Vagina (tissue), 2 donors: ENCODE measurements at regions of chr20 and their contacts with region 1.

Region 1: GRCh38 chr20:47272893-47273590 is 83.5 kb downstream of the ZMYND8 start:
- DNase-seq: no peak
- H3K4me3 ChIP-seq: no peak overlapping the region
- H3K27ac ChIP-seq: peak overlapping the region; percentile 91
- H3K4me1 ChIP-seq: peaks cover 42% of the 10 kb centered on the region
- H3K27me3 ChIP-seq: no peaks in the 10 kb centered on the region
- CTCF ChIP-seq: peak; percentile 90 to 98 (median 94)
- POLR2A ChIP-seq: no peak

Region 2: GRCh38 chr20:47317127-47317895 is 44.3 kb after region 1 on chr20:
- intact Hi-C with region 1: loop called (anchors 5 kb)
- DNase-seq: peak; percentile 98
- H3K4me3 ChIP-seq: peak overlapping the region; percentile 17 to 19
- H3K27ac ChIP-seq: peak overlapping the region; percentile 99
- H3K4me1 ChIP-seq: peaks cover 84% of the 10 kb centered on the region
- H3K27me3 ChIP-seq: no peaks in the 10 kb centered on the region
- CTCF ChIP-seq: no peak
- POLR2A ChIP-seq: peak in 1 of 2 donors; percentile 28

Region 3: GRCh38 chr20:47379433-47380150 is 106.5 kb after region 1 on chr20:
- intact Hi-C with region 1: loop called (anchors 1 kb)
- DNase-seq: peak in 1 of 2 donors; percentile 87
- H3K4me3 ChIP-seq: no peak overlapping the region
- H3K27ac ChIP-seq: no peak overlapping the region
- H3K4me1 ChIP-seq: peaks cover 8% of the 10 kb centered on the region
- H3K27me3 ChIP-seq: no peaks in the 10 kb centered on the region
- CTCF ChIP-seq: no peak
- POLR2A ChIP-seq: no peak

Region 4: GRCh38 chr20:47440857-47441773 is 168.1 kb after region 1 on chr20:
- intact Hi-C with region 1: no loop called
- DNase-seq: no peak
- H3K4me3 ChIP-seq: no peak overlapping the region
- H3K27ac ChIP-seq: no peak overlapping the region
- H3K4me1 ChIP-seq: no peaks in the 10 kb centered on the region
- H3K27me3 ChIP-seq: no peaks in the 10 kb centered on the region
- CTCF ChIP-seq: no peak
- POLR2A ChIP-seq: no peak

Region 5: GRCh38 chr20:49256261-49256660 is 1983.2 kb after region 1 on chr20:
- intact Hi-C with region 1: no loop called
- DNase-seq: no peak
- H3K4me3 ChIP-seq: no peak overlapping the region
- H3K27ac ChIP-seq: no peak overlapping the region
- H3K4me1 ChIP-seq: no peaks in the 10 kb centered on the region
- H3K27me3 ChIP-seq: no peaks in the 10 kb centered on the region
- CTCF ChIP-seq: no peak
- POLR2A ChIP-seq: no peak